CD8-positive, alpha-beta T cell (primary cell): ENCODE measurements at regions of chr1 and their contacts with region 1.

Region 1: DNA sequence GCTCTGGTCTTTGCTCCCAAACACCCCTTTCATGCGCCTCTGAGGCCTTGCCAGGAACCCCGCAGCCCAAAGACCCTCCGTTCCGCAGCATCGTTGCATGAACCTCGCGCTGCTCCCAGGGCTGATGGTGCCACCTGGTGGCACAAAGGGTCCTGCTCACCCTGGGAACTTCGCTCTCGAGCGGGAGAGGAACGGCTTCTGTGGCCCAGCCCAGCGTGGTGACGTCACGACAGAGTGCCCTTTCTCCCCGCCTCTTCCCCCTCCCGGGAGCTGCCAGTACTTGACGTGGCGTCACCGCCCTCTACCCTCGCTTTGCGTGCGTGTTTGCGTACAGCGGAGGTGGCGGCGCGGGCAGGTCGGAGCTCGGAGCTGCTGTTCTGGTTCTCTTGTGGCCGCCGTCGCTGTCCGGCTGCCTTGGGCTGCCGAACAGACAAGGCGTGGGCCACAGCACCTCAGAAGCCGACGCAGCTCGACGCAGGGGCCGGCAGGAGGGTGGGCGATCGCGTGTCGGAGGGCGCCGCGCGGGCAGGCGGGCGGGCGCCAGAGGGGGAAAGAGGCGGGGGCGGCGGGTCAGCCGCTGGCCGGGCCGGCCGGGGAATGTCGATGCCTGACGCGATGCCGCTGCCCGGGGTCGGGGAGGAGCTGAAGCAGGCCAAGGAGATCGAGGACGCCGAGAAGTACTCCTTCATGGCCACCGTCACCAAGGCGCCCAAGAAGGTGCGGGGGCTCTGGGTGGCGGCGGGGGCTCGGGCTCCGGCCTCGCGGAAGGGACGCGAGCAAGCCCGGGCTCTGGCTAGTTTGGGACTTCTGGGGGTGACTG is at the start of gene AHCYL1:
- DNase-seq: peak; percentile 98 to 99 (median 99)
- ATAC-seq: peak; percentile 99
- H3K4me3 ChIP-seq: peak within 1 kb of the TSS; percentile 75 to 84
- H3K4me3 Mint-ChIP-seq: peak within 1 kb of the TSS; percentile 99
- H3K27ac ChIP-seq: peak within 1 kb of the TSS; percentile 72 to 84
- H3K27ac Mint-ChIP-seq: peak within 1 kb of the TSS; percentile 97
- H3K4me1 ChIP-seq: peaks cover 20% of the 10 kb centered on the region
- H3K4me1 Mint-ChIP-seq: peaks cover 45% of the 10 kb centered on the region
- H3K27me3 ChIP-seq: no peaks in the 10 kb centered on the region
- H3K27me3 Mint-ChIP-seq: no peaks in the 10 kb centered on the region
- CTCF ChIP-seq: peak; percentile 86
- total RNA-seq, gene AHCYL1: 5.3 to 5.5 TPM

Region 2: GRCh38 chr1:109548321-109549267 is 436.1 kb before region 1 on chr1 and contains the start of gene GNAI3:
- CTCF ChIA-PET with region 1: interaction called, 21 read pairs
- POLR2A ChIA-PET with region 1: interaction called, 13 read pairs
- intact Hi-C with region 1: loop called (anchors 1 kb)
- DNase-seq: peak; percentile 90 to 98 (median 96)
- ATAC-seq: peak; percentile 85
- H3K4me3 ChIP-seq: peak within 1 kb of the TSS; percentile 74 to 98
- H3K4me3 Mint-ChIP-seq: peak within 1 kb of the TSS; percentile 98
- H3K27ac ChIP-seq: peak within 1 kb of the TSS; percentile 89 to 97
- H3K27ac Mint-ChIP-seq: peak within 1 kb of the TSS; percentile 99
- H3K4me1 ChIP-seq: peaks cover 28% of the 10 kb centered on the region
- H3K4me1 Mint-ChIP-seq: peaks cover 60% of the 10 kb centered on the region
- H3K27me3 ChIP-seq: no peaks in the 10 kb centered on the region
- H3K27me3 Mint-ChIP-seq: no peaks in the 10 kb centered on the region
- CTCF ChIP-seq: no peak
- total RNA-seq, gene GNAI3: 6.8 to 7.1 TPM

Region 3: GRCh38 chr1:109649491-109649914 is 335.2 kb before region 1 on chr1:
- CTCF ChIA-PET with region 1: interaction called, 14 read pairs
- POLR2A ChIA-PET with region 1: no interaction called
- intact Hi-C with region 1: no loop called
- DNase-seq: no peak
- ATAC-seq: no peak
- H3K4me3 ChIP-seq: no peak overlapping the region
- H3K4me3 Mint-ChIP-seq: no peak overlapping the region
- H3K27ac ChIP-seq: no peak overlapping the region
- H3K27ac Mint-ChIP-seq: no peak overlapping the region
- H3K4me1 ChIP-seq: no peaks in the 10 kb centered on the region
- H3K4me1 Mint-ChIP-seq: no peaks in the 10 kb centered on the region
- H3K27me3 ChIP-seq: no peaks in the 10 kb centered on the region
- H3K27me3 Mint-ChIP-seq: peaks cover 2% of the 10 kb centered on the region
- CTCF ChIP-seq: no peak

Region 4: DNA sequence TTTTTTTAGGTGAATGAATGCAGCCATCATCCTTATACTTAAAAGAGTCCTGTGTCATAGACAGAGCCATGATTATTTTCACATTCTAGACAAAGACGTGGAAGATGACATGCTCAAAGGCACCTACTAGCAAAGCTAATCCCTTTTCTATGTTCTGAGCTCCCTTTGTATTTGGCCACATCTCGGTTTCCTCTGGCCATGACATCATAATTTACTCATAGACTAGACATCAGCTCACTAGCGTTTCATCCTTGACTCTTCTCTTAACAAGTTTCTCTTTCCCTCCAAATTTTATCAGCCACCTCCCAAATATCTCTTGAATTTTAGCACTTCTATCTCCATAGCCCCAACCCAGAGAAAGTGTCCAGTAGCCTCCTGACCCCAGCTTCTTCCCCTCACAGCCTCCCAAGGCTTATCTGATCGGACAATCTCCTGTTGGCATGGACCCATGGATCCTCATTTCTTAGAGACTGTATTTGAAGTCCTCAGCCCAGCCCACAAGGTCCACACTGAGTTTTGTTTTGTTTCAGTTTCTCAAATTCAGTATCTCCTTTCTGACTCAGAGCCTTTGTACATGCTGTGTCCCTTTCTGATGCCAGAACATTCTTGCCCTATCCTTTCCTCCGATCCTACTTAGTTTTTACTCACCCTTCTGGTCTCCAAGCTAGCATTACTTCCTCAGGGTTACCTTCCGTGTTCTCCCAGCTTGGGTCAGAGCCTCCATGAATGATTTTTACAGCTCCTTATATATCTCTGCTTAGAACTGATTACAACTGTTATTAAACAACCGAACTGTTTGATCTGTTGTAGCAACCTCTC is 188.0 kb before region 1 on chr1:
- CTCF ChIA-PET with region 1: interaction called, 62 read pairs
- POLR2A ChIA-PET with region 1: interaction called, 10 read pairs
- intact Hi-C with region 1: loop called in 1 of 2 experiments (anchors 5 kb)
- DNase-seq: no peak
- ATAC-seq: no peak
- H3K4me3 ChIP-seq: no peak overlapping the region
- H3K4me3 Mint-ChIP-seq: no peak overlapping the region
- H3K27ac ChIP-seq: no peak overlapping the region
- H3K27ac Mint-ChIP-seq: no peak overlapping the region
- H3K4me1 ChIP-seq: peaks cover 66% of the 10 kb centered on the region
- H3K4me1 Mint-ChIP-seq: peaks cover 70% of the 10 kb centered on the region
- H3K27me3 ChIP-seq: no peaks in the 10 kb centered on the region
- H3K27me3 Mint-ChIP-seq: no peaks in the 10 kb centered on the region
- CTCF ChIP-seq: no peak

Region 5: DNA sequence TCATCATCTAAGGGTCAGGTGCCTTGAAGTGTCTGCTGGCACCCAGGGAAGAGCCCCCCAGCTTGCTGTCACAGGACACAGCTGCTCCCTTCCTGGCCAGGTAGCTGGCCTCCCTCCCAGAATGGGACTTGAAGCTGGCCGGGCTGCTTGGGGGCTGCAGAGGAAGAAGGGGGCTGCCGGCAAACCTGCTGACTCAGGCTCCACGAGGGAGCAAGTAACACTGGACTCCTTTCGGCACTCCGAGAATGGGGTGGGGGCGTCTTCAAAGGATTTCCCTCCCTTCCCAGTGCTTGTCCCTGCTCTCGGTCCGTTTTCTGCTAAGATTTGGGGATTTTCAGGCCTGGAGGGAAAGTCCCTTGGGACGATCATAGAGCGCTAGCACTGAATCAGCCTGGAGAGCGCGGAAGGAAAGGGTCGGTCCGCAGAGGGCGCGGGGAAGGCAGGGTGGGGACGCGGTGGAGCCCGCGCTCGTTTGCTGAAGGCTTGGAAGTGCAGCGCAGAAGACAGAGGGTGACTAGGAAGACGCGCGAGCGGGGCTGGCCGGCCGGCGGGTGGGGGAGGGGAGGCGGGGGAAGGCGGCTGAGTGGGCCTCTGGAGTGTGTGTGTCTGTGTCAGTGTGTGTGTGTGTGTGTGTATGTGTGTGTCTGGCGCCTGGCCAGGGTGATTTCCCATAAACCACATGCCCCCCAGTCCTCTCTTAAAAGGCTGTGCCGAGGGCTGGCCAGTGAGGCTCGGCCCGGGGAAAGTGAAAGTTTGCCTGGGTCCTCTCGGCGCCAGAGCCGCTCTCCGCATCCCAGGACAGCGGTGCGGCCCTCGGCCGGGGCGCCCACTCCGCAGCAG is 74.3 kb before region 1 on chr1 and contains the start of gene CSF1:
- CTCF ChIA-PET with region 1: interaction called, 6 read pairs
- POLR2A ChIA-PET with region 1: no interaction called
- intact Hi-C with region 1: loop called in 1 of 2 experiments (anchors 1 kb)
- DNase-seq: peak; percentile 24 to 84 (median 55)
- ATAC-seq: peak; percentile 50
- H3K4me3 ChIP-seq: peak within 1 kb of the TSS; percentile 53 to 66
- H3K4me3 Mint-ChIP-seq: peak within 1 kb of the TSS; percentile 88
- H3K27ac ChIP-seq: peak within 1 kb of the TSS in 1 of 2 experiments; percentile 29
- H3K27ac Mint-ChIP-seq: peak within 1 kb of the TSS; percentile 83
- H3K4me1 ChIP-seq: peaks cover 32% of the 10 kb centered on the region
- H3K4me1 Mint-ChIP-seq: peaks cover 61% of the 10 kb centered on the region
- H3K27me3 ChIP-seq: no peaks in the 10 kb centered on the region
- H3K27me3 Mint-ChIP-seq: no peaks in the 10 kb centered on the region
- CTCF ChIP-seq: no peak
- total RNA-seq, gene CSF1: 5.6 to 5.8 TPM